B cell (primary cell): ENCODE measurements at regions of chr2 and their contacts with region 1.

Region 1: GRCh38 chr2:99180755-99181623 is at the starts of genes MITD1 and MRPL30:
- DNase-seq: peak; percentile 96
- ATAC-seq: peak; percentile 96
- H3K4me3 ChIP-seq: peak within 1 kb of the TSS; percentile 93 to 100 (median 97)
- H3K4me3 Mint-ChIP-seq: peak within 1 kb of the TSS; percentile 99
- H3K27ac ChIP-seq: peak within 1 kb of the TSS; percentile 92 to 95
- H3K27ac Mint-ChIP-seq: peak within 1 kb of the TSS; percentile 99
- H3K4me1 ChIP-seq: peaks cover 25 to 26% of the 10 kb centered on the region in 2 donors
- H3K4me1 Mint-ChIP-seq: peaks cover 49% of the 10 kb centered on the region
- H3K27me3 ChIP-seq: no peaks in the 10 kb centered on the region
- H3K27me3 Mint-ChIP-seq: no peaks in the 10 kb centered on the region
- CTCF ChIP-seq: no peak
- total RNA-seq, gene MITD1: 71.6 and 73.0 TPM in 2 replicates
- total RNA-seq, gene MRPL30: 18.5 and 21.9 TPM in 2 replicates

Region 2: GRCh38 chr2:98743835-98744234 is 437.2 kb before region 1 on chr2:
- CTCF ChIA-PET with region 1: no interaction called
- POLR2A ChIA-PET with region 1: no interaction called
- intact Hi-C with region 1: no loop called
- DNase-seq: no peak
- ATAC-seq: no peak
- H3K4me3 ChIP-seq: no peak overlapping the region
- H3K4me3 Mint-ChIP-seq: no peak overlapping the region
- H3K27ac ChIP-seq: no peak overlapping the region
- H3K27ac Mint-ChIP-seq: no peak overlapping the region
- H3K4me1 ChIP-seq: peaks cover 11 to 13% of the 10 kb centered on the region in 2 donors
- H3K4me1 Mint-ChIP-seq: peaks cover 16% of the 10 kb centered on the region
- H3K27me3 ChIP-seq: peaks cover 0 to 2% (median 0%) of the 10 kb centered on the region in 4 experiments
- H3K27me3 Mint-ChIP-seq: peaks cover 5% of the 10 kb centered on the region
- CTCF ChIP-seq: no peak

Region 3: GRCh38 chr2:99066075-99066958 is 114.7 kb before region 1 on chr2:
- CTCF ChIA-PET with region 1: interaction called, 5 read pairs
- POLR2A ChIA-PET with region 1: no interaction called
- intact Hi-C with region 1: loop called (anchors 1 kb)
- DNase-seq: peak; percentile 62
- ATAC-seq: peak; percentile 78
- H3K4me3 ChIP-seq: peak overlapping the region in 1 of 5 experiments; percentile 20
- H3K4me3 Mint-ChIP-seq: no peak overlapping the region
- H3K27ac ChIP-seq: peak overlapping the region in 1 of 2 donors; percentile 52
- H3K27ac Mint-ChIP-seq: no peak overlapping the region
- H3K4me1 ChIP-seq: peaks cover 9 to 10% of the 10 kb centered on the region in 2 donors
- H3K4me1 Mint-ChIP-seq: no peaks in the 10 kb centered on the region
- H3K27me3 ChIP-seq: no peaks in the 10 kb centered on the region
- H3K27me3 Mint-ChIP-seq: no peaks in the 10 kb centered on the region
- CTCF ChIP-seq: peak; percentile 70

Region 4: GRCh38 chr2:99085421-99085820 is 95.6 kb before region 1 on chr2:
- CTCF ChIA-PET with region 1: interaction called, 9 read pairs
- POLR2A ChIA-PET with region 1: no interaction called
- intact Hi-C with region 1: loop called (anchors 1 kb)
- DNase-seq: peak; percentile 10
- ATAC-seq: no peak
- H3K4me3 ChIP-seq: no peak overlapping the region
- H3K4me3 Mint-ChIP-seq: no peak overlapping the region
- H3K27ac ChIP-seq: no peak overlapping the region
- H3K27ac Mint-ChIP-seq: no peak overlapping the region
- H3K4me1 ChIP-seq: no peaks in the 10 kb centered on the region
- H3K4me1 Mint-ChIP-seq: no peaks in the 10 kb centered on the region
- H3K27me3 ChIP-seq: peaks cover 0 to 5% (median 1%) of the 10 kb centered on the region in 4 experiments
- H3K27me3 Mint-ChIP-seq: peaks cover 8% of the 10 kb centered on the region
- CTCF ChIP-seq: peak; percentile 46

Region 5: DNA sequence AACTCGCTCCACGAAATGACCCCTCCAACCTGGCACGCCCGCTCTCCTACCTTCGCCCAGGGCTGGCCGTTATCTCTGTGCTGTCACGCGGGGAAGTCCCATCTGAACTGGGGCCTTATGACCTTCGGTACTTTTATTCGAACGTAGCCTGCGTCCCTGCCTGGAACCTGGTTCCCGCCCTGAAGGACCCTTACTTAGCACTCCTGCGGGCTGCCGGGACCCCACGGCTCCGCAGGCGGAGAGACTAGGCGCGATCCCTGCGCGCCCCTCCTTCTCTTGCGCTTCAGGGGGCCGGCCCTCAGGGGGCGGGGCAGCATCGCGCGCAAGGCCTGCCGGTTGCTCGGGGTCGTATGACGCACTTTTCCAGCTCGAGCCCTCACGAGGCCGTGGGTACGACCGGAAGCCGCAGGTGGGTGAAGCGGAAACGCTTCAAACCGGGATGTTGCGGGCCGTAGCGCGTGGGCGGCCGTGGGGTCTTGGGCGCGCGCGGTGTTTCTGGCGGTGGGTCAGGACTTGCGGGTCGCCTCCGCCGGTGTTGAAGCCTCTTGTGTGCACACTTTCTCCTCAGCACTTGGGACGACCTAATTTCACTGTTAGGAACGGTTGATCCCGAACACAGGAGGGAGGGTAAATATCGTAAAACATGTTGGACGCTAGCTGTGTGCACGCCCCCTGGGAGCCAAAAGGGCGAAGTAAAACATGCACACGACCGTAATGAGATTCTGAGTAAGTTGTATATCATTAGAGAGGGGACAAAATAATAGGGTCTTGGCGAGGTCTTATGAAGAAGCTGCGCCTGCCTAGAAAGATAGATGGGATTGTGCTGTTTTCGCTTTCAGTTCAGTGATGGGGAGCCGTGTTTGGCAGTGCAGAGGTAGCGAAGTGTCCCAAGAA is 26.1 kb before region 1 on chr2 and contains the starts of genes LIPT1 and TSGA10:
- CTCF ChIA-PET with region 1: interaction called, 20 read pairs
- POLR2A ChIA-PET with region 1: interaction called, 6 read pairs
- intact Hi-C with region 1: loop called (anchors 1 kb)
- DNase-seq: peak; percentile 97
- ATAC-seq: peak; percentile 90
- H3K4me3 ChIP-seq: peak within 1 kb of the TSS; percentile 86 to 98 (median 94)
- H3K4me3 Mint-ChIP-seq: no peak within 1 kb of the TSS
- H3K27ac ChIP-seq: peak within 1 kb of the TSS; percentile 91 to 99
- H3K27ac Mint-ChIP-seq: peak within 1 kb of the TSS; percentile 91
- H3K4me1 ChIP-seq: peaks cover 27 to 29% of the 10 kb centered on the region in 2 donors
- H3K4me1 Mint-ChIP-seq: peaks cover 47% of the 10 kb centered on the region
- H3K27me3 ChIP-seq: no peaks in the 10 kb centered on the region
- H3K27me3 Mint-ChIP-seq: no peaks in the 10 kb centered on the region
- CTCF ChIP-seq: no peak
- total RNA-seq, gene LIPT1: 24.3 and 26.2 TPM in 2 replicates
- total RNA-seq, gene TSGA10: 36.9 and 39.6 TPM in 2 replicates